Colonic mucosa (tissue), 4 donors: ENCODE measurements at regions of chr3 and their contacts with region 1.

Region 1: DNA sequence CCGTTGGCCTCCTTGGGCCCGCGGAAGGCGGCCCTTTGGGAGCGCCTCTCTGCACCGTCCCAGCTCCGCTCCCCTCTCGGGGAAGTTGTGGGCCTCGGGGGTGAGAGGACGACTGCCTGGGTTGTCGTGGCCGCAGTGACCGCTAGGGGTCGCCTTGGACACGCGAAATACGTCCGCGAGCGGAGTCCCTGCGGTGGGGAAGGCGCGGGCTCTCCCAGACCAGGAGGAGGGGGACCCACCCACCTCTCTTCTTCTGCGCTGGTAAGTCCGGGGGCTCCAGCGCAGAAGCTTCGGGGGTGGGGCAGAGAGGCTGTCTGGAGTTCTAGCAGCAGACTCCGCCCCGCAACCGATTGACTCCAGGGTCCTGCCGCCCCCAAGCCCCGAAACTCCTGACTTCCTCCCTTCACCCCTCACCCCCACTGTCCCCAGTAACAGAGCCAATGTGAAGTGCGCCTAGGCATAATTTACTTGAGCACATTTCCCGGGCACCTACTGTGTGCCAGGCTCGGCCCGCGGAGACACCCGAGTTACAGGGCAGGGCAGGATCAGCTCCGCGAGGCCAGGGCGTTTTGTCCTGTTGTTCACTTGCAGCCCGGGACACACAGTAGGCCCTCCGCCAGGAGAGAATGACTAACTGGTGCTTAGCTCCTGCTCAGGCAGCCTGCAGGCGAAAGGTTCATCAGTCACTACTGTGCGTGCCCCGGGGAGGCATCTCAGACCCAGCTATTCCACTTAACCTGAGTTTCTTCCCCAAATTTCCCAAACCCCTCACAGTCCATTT is 32.8 kb downstream of the DNASE1L3 start:
- DNase-seq: peak; percentile 97
- H3K4me3 ChIP-seq: peak overlapping the region; percentile 39
- H3K27ac ChIP-seq: no peak overlapping the region
- H3K4me1 ChIP-seq: peaks cover 40% of the 10 kb centered on the region
- H3K27me3 ChIP-seq: no peaks in the 10 kb centered on the region
- CTCF ChIP-seq: peak; percentile 94

Region 2: GRCh38 chr3:57961828-57962447 is 216.0 kb before region 1 on chr3:
- intact Hi-C with region 1: loop called (anchors 10 kb)
- DNase-seq: no peak
- H3K4me3 ChIP-seq: no peak overlapping the region
- H3K27ac ChIP-seq: peak overlapping the region; percentile 75
- H3K4me1 ChIP-seq: peaks cover 20% of the 10 kb centered on the region
- H3K27me3 ChIP-seq: no peaks in the 10 kb centered on the region
- CTCF ChIP-seq: peak; percentile 34

Region 3: DNA sequence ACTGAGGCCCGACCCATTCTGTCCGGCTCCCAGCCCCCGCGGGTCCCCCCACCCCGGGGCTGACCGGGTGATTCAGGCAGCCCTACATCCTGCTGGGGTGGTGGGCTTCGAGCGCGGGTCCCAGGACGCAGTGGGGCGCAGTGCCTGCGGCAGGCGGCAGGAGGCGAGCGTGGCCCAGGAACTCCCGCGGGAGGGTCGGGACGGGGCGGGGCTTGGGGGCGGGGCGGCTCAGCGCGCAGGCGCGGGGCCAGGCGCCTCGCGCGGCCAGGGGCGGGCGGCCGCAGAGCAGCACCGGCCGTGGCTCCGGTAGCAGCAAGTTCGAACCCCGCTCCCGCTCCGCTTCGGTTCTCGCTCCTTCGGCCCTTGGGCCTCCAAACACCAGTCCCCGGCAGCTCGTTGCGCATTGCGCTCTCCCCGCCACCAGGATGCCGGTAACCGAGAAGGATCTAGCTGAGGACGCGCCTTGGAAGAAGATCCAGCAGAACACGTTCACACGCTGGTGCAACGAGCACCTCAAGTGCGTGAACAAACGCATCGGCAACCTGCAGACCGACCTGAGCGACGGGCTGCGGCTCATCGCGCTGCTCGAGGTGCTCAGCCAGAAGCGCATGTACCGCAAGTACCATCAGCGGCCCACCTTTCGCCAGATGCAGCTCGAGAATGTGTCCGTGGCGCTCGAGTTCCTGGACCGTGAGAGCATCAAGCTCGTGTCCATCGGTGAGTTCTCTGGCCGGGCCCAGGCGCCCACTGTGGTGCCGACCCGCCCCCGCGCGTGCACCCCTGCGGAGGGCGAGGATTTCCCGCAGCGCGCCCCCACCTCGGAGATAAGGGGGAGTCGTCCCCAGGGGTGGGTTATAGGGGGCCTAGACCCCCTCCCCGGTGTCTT is 169.6 kb before region 1 on chr3 and contains the start of gene FLNB:
- intact Hi-C with region 1: loop called (anchors 5 kb)
- DNase-seq: peak; percentile 83
- H3K4me3 ChIP-seq: peak within 1 kb of the TSS; percentile 73
- H3K27ac ChIP-seq: peak within 1 kb of the TSS; percentile 87
- H3K4me1 ChIP-seq: peaks cover 6% of the 10 kb centered on the region
- H3K27me3 ChIP-seq: no peaks in the 10 kb centered on the region
- CTCF ChIP-seq: peak; percentile 60
- total RNA-seq, gene FLNB: 246 to 362 TPM

Region 4: GRCh38 chr3:59052803-59053411 is 875.0 kb after region 1 on chr3:
- intact Hi-C with region 1: no loop called
- DNase-seq: peak; percentile 30
- H3K4me3 ChIP-seq: no peak overlapping the region
- H3K27ac ChIP-seq: no peak overlapping the region
- H3K4me1 ChIP-seq: no peaks in the 10 kb centered on the region
- H3K27me3 ChIP-seq: no peaks in the 10 kb centered on the region
- CTCF ChIP-seq: peak; percentile 65